ENCODE measurements at regions of chr2 and their contacts with region 1.

Region 1: DNA sequence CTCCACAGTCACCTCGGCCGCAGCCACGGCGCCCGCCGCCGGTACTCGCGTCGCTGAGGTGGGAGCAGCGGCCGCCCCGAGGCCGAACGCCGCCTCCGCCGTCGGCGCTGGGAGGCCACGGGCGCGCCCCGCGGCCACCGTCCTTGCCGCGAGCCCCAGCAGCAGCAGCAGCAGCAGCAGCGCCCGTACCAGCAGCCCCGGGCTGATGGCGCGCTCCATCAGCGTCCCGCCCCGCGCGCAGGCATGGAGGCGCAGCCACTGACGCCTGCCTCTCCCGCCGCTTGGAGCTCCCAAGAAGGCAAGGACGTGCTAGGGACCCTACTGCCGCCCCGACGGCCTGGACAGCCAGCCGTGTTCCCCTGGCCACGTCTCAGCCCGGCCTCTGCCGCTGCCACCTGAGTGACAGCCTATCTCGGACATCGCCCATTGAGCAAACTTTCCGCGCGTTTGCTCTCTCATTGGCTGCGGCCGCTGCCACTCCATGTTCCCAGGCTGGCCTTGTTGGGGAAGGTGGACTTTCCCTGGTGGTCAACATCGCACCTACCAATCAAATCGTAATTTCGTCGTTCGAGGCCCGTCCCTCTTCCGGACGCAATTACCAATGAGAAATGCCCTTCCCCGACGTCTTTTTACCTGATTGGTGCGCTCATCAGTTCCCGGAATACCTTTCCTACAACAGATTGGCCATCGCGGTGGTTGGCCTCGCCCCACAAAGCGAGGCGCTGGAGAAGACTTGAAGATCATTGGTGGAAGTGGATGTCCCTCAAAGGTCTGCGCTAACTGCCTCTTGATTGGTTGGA is at the start of gene EIF2AK3:
- DNase-seq: peak; percentile 96
- H3K4me3 Mint-ChIP-seq: peak within 1 kb of the TSS; percentile 91
- H3K27ac Mint-ChIP-seq: peak within 1 kb of the TSS; percentile 85
- H3K4me1 Mint-ChIP-seq: peaks cover 14% of the 10 kb centered on the region
- H3K27me3 Mint-ChIP-seq: no peaks in the 10 kb centered on the region
- total RNA-seq, gene EIF2AK3: 10.0 to 13.7 TPM

Region 2: GRCh38 chr2:88563129-88563528 is 64.1 kb before region 1 on chr2:
- CTCF ChIA-PET with region 1: no interaction called
- intact Hi-C with region 1: no loop called
- DNase-seq: no peak
- H3K4me3 Mint-ChIP-seq: no peak overlapping the region
- H3K27ac Mint-ChIP-seq: no peak overlapping the region
- H3K4me1 Mint-ChIP-seq: peaks cover 4% of the 10 kb centered on the region
- H3K27me3 Mint-ChIP-seq: no peaks in the 10 kb centered on the region

Region 3: DNA sequence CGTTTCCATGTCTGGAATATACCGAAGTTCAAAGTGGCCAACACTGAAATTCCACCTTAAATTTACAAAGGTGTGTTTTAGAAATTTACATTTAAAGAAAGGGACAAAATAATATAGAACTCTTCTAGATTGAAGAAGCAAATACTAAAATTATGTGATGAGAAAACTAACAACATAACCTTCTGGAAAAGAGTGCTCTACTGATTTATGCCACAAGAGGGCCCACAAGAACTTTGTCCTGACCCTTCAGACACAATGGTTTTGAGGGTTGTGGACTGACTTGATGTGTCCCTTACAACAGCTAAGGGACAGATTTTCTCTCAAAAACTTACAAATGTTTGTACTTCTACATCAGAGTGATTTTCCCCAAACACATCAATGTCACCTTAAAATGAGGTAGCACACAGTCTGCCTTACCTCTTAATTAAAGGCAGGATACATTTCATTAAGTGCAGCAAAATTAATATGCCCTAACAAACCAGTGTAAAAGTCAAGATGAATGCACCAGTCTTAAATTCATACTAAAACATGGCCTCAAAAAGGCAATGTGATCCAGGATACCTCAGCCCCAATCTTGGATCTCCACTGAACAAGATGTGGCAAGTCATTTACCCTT is 36.1 kb before region 1 on chr2:
- CTCF ChIA-PET with region 1: interaction called, 7 read pairs
- intact Hi-C with region 1: loop called (anchors 2 kb)
- DNase-seq: peak; percentile 60
- H3K4me3 Mint-ChIP-seq: no peak overlapping the region
- H3K27ac Mint-ChIP-seq: no peak overlapping the region
- H3K4me1 Mint-ChIP-seq: no peaks in the 10 kb centered on the region
- H3K27me3 Mint-ChIP-seq: no peaks in the 10 kb centered on the region

Region 4: DNA sequence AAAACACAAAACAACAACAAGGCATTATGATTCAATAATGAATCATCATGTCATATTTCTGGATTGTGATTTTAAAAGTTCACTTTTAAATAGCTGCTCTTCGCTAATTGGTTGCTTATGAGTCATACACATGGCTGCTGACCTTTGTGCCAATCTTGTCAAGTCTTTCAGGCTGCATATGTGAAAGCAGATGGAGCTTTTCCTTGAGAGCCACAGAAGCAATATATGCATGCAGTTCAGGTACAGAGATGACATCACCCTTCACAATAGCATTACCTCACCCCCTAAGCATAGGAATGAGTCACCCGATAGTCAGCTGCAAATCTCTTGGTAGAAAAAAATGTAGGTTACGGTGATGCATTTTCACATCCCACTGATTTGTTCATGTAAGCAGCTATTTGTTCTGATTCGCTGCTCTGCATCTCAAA is 27.2 kb before region 1 on chr2:
- CTCF ChIA-PET with region 1: interaction called, 3 read pairs
- intact Hi-C with region 1: loop called (anchors 1 kb)
- DNase-seq: peak; percentile 67
- H3K4me3 Mint-ChIP-seq: no peak overlapping the region
- H3K27ac Mint-ChIP-seq: peak overlapping the region; percentile 16
- H3K4me1 Mint-ChIP-seq: peaks cover 35% of the 10 kb centered on the region
- H3K27me3 Mint-ChIP-seq: no peaks in the 10 kb centered on the region

Region 5: DNA sequence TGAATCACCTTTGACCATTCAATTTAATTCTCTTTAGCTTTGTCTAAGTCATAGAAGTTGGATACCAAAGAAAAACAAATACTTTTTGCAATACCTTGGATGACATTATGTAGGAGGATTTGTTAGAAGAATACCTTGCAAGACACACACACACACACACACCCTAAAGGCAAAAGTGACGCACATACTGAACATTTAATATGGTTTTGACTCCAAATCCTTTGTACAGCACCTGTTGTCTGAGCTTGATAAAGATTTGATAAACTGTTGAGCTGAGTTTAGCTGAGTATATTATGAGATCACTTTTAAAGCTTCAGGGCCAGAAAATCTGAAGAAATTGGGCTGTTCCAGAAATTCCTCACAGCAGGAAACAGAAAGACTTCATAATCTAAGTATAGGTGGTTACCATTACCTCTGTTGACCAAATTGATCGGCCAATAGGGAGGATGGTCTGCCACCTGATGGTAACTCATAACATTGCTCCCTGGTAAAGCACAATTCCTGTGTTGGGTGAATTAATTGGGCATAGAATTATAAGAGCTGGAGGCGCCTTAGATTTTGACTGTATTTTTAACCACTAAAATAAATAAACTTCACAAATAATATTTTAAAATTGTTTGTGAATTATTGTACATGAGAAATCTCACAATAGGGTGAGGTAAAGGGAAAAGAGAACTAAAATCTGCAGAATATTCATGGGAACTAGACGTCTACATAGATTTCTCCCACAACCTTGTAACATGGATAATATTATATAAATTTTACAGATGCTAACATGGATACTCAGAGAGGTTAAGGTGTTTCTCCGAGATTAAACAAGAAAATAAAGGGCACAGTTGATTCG is 42.3 kb after region 1 on chr2:
- CTCF ChIA-PET with region 1: interaction called, 10 read pairs
- intact Hi-C with region 1: loop called (anchors 1 kb)
- DNase-seq: peak; percentile 55
- H3K4me3 Mint-ChIP-seq: no peak overlapping the region
- H3K27ac Mint-ChIP-seq: no peak overlapping the region
- H3K4me1 Mint-ChIP-seq: no peaks in the 10 kb centered on the region
- H3K27me3 Mint-ChIP-seq: no peaks in the 10 kb centered on the region

Region 6: GRCh38 chr2:88691339-88692183 is 64.3 kb after region 1 on chr2 and contains the start of gene RPIA:
- CTCF ChIA-PET with region 1: no interaction called
- intact Hi-C with region 1: loop called (anchors 1 kb)
- DNase-seq: peak; percentile 99
- H3K4me3 Mint-ChIP-seq: peak within 1 kb of the TSS; percentile 93
- H3K27ac Mint-ChIP-seq: peak within 1 kb of the TSS; percentile 91
- H3K4me1 Mint-ChIP-seq: peaks cover 50% of the 10 kb centered on the region
- H3K27me3 Mint-ChIP-seq: no peaks in the 10 kb centered on the region
- total RNA-seq, gene RPIA: 67.3 to 70.0 TPM

Region 7: GRCh38 chr2:88753833-88754584 is 126.8 kb after region 1 on chr2:
- CTCF ChIA-PET with region 1: no interaction called
- intact Hi-C with region 1: loop called (anchors 1 kb)
- DNase-seq: peak; percentile 79
- H3K4me3 Mint-ChIP-seq: no peak overlapping the region
- H3K27ac Mint-ChIP-seq: peak overlapping the region; percentile 98
- H3K4me1 Mint-ChIP-seq: peaks cover 57% of the 10 kb centered on the region
- H3K27me3 Mint-ChIP-seq: no peaks in the 10 kb centered on the region